K562 (cell line): ENCODE measurements at regions of chr7 and their contacts with region 1.

Region 1: DNA sequence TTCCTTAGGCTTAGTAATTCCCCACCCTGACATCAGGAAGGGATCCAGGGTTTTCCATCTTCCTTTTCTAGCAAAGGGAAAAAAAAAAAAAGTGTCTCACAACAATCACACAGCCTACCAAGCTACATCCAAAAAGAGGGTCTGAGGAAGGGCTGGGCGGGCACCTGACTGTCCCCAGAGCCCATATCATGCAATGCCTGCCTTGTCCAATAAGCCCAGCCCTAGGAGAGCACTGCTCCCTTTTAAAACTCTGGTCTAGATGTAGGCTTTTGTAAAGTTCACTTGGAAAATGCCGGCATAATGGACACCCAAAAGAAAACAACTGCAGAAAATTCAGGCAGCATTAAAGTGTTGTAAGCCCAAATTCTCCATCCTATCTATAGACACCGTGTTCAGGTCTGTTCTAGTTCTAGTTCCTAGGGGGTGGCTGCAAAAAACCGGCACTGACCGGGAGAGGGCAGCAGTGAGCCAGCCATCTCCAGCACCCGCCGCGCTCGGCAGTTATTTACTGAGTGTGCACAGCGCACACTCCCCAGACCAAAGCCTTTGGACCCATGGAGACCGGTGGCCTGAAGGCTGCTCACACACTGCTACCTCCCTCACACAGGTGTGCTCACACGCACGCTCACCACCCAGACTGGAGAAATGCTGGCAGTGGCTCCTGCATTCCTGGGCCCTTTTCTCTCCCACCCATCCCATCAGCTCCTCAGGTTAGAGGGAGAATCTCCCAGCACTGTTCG is 48.7 kb downstream of the PODXL start:
- DNase-seq: peak; percentile 81 to 89 (median 88)
- ATAC-seq: peak; percentile 92
- H3K4me3 ChIP-seq: no peak overlapping the region
- H3K27ac ChIP-seq: no peak overlapping the region
- H3K4me1 ChIP-seq: peaks cover 2 to 12% of the 10 kb centered on the region in 2 experiments; a peak in 2 of 5 replicates
- H3K27me3 ChIP-seq: peaks cover 40 to 68% of the 10 kb centered on the region in 2 experiments
- CTCF ChIP-seq: peak; percentile 95 to 99 (median 96)
- EP300 ChIP-seq: no peak
- POLR2A ChIP-seq: no peak
- RAD21 ChIP-seq: peak; percentile 77 to 91

Region 2: DNA sequence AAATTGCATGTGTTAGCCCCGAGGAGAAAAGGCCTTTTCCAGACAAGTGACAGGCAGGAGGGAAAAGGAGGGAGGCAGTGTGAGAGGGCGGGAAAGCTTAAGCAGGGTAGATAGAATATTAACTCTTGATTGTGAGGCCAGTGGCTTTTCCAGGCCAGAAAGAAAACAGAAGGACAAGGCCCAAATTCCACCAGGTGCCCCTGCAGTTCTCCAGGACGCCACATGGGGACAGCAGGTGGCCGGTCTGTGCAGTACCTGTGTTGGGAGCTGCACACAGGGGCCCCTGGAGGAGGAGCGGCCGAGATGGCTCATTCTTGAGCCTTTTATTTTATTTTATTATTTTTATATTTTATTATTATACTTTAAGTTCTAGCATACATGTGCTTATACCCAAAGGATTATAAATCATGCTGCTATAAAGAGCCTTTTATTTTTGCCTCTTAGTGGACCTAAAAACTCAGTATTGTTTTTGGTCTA is 632.5 kb before region 1 on chr7:
- CTCF ChIA-PET with region 1: interaction called, 3 read pairs
- POLR2A ChIA-PET with region 1: no interaction called
- in situ Hi-C with region 1: loop called (anchors 10 kb)
- intact Hi-C with region 1: loop called (anchors 5 kb)
- DNase-seq: peak; percentile 79 to 93 (median 90)
- ATAC-seq: peak; percentile 100
- H3K4me3 ChIP-seq: no peak overlapping the region
- H3K27ac ChIP-seq: no peak overlapping the region
- H3K4me1 ChIP-seq: no peaks in the 10 kb centered on the region
- H3K27me3 ChIP-seq: no peaks in the 10 kb centered on the region
- CTCF ChIP-seq: peak; percentile 97 to 99 (median 99)
- EP300 ChIP-seq: no peak
- POLR2A ChIP-seq: no peak
- RAD21 ChIP-seq: peak; percentile 72 to 93

Region 3: GRCh38 chr7:131546583-131547111 is 38.9 kb after region 1 on chr7:
- CTCF ChIA-PET with region 1: interaction called, 3 read pairs
- POLR2A ChIA-PET with region 1: no interaction called
- in situ Hi-C with region 1: no loop called
- intact Hi-C with region 1: loop called (anchors 2 kb)
- DNase-seq: peak; percentile 83 to 94 (median 90)
- ATAC-seq: peak; percentile 85
- H3K4me3 ChIP-seq: no peak overlapping the region
- H3K27ac ChIP-seq: no peak overlapping the region
- H3K4me1 ChIP-seq: peaks cover 3 to 5% of the 10 kb centered on the region in 2 experiments; a peak in 2 of 5 replicates
- H3K27me3 ChIP-seq: peaks cover 22 to 64% of the 10 kb centered on the region in 2 experiments
- CTCF ChIP-seq: peak; percentile 99
- EP300 ChIP-seq: no peak
- POLR2A ChIP-seq: no peak
- RAD21 ChIP-seq: peak; percentile 32 to 68; a peak in 2 of 4 replicates

Region 4: DNA sequence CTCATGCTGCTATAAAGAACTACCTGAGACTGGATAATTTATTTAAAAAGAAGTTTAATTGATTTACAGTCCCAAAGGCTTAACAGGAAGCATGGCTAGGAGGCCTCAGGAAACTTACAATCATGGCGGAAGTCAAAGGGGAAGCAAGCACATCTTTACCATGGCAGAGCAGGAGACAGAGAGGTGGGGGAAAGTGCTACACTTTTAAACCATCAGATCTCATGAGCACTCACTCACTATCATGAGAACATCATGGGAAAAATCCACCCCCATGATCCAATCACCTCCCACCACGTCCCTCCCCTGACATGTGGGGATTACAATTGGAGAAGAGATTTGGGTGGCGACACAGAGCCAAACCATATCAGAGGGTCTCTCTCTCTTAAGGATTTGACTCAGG is 157.3 kb after region 1 on chr7:
- CTCF ChIA-PET with region 1: no interaction called
- POLR2A ChIA-PET with region 1: no interaction called
- in situ Hi-C with region 1: no loop called
- intact Hi-C with region 1: no loop called
- DNase-seq: no peak
- ATAC-seq: no peak
- H3K4me3 ChIP-seq: no peak overlapping the region
- H3K27ac ChIP-seq: no peak overlapping the region
- H3K4me1 ChIP-seq: no peaks in the 10 kb centered on the region
- H3K27me3 ChIP-seq: peaks cover 16 to 18% of the 10 kb centered on the region in 2 experiments
- CTCF ChIP-seq: no peak
- EP300 ChIP-seq: no peak
- POLR2A ChIP-seq: no peak
- RAD21 ChIP-seq: no peak